AG04449 (cell line): ENCODE measurements at regions of chr12 and their contacts with region 1.

Region 1: GRCh38 chr12:30806989-30807694 is 52.4 kb upstream of the CAPRIN2 start:
- DNase-seq: no peak
- H3K4me3 ChIP-seq: no peak overlapping the region
- CTCF ChIP-seq: peak; percentile 50

Region 2: GRCh38 chr12:29519585-29520182 is 1287.5 kb before region 1 on chr12:
- CTCF ChIA-PET with region 1: interaction called, 57 read pairs
- POLR2A ChIA-PET with region 1: no interaction called
- DNase-seq: no peak
- H3K4me3 ChIP-seq: no peak overlapping the region
- CTCF ChIP-seq: peak; percentile 9

Region 3: GRCh38 chr12:29552324-29552927 is 1254.7 kb before region 1 on chr12:
- CTCF ChIA-PET with region 1: interaction called, 20 read pairs
- POLR2A ChIA-PET with region 1: no interaction called
- DNase-seq: no peak
- H3K4me3 ChIP-seq: no peak overlapping the region
- CTCF ChIP-seq: peak; percentile 84

Region 4: DNA sequence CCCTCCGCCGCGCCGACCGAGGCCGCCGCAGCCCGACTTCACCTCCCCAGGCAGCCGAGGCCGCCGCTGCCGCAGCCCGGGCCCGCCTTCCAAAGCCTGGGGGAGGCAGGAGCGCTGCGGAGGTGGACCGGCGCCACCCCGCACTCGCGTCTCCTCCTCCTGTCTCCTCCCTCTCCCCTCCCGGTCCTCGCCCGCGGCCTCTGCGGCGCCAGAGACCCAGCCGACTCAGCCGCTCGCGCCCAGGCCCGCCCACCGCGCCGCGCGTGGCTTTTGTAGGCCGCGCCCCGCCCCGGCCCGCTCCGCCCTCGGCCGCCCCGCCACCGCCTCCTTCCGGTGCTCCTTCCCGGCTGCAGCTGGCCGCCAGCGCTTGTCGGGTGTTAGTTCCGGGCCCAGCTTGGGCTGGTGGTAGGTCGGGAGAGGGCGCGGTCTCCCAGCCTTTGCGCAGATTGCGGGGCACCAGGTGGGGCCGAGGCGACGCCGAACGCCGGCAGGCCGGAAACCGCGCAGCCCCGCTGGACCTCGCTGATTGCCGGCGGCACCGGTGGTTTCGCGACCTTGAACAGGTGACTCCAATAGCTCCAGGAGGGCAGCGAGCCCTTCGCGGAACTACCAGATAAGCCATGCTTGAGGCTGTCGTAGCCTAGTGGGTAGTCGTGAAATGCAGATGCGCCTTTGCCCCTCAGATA is 52.3 kb before region 1 on chr12 and contains the start of gene CAPRIN2:
- CTCF ChIA-PET with region 1: interaction called, 23 read pairs
- POLR2A ChIA-PET with region 1: no interaction called
- DNase-seq: peak; percentile 33
- H3K4me3 ChIP-seq: peak within 1 kb of the TSS; percentile 77
- CTCF ChIP-seq: peak; percentile 57

Region 5: DNA sequence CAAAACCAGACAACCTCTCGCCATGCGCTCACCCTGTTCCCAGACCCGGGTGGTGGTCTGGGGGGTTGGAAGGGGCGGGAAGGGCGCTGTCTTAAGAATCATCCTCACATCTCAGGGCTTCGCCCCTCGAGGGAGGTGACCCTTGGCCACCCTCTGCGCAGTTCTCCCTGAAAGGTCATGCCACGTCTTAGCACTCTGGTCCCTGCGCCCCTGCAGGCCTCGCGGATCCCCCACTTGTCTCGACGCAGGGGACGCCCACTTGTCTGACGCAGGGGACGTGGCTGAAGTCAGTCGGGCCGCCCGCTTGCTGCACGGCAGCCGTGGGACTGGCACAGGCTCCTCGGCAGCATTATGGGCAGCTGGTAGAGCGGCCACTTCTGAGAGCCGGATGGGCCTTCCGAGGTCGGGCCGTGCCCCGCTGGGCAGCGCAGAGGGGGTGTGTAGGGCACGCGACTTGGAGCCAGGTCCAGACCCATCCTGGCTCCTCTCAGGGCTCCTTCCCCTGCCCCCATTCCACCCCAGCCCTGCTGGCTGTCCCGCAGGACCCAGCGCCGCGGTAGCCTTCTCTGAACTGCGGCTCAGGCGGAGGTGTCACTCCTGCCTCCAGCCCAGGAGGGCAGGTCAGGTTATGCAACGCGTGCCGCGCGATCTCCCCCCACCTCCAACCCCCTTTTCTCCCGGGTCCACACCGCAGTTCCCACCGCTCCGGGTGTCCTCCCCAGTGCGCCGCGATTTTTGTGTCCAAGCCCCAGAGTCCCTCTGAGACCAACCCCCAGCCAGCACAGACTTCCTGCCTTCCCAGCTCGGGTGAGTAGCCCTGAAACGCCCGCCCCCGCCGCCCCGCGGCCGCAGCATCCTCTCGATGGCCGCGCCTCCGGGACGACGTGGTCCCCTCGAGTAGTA is 11.5 kb before region 1 on chr12:
- CTCF ChIA-PET with region 1: interaction called, 24 read pairs
- POLR2A ChIA-PET with region 1: no interaction called
- DNase-seq: no peak
- H3K4me3 ChIP-seq: peak overlapping the region; percentile 72
- CTCF ChIP-seq: peak; percentile 20

Region 6: DNA sequence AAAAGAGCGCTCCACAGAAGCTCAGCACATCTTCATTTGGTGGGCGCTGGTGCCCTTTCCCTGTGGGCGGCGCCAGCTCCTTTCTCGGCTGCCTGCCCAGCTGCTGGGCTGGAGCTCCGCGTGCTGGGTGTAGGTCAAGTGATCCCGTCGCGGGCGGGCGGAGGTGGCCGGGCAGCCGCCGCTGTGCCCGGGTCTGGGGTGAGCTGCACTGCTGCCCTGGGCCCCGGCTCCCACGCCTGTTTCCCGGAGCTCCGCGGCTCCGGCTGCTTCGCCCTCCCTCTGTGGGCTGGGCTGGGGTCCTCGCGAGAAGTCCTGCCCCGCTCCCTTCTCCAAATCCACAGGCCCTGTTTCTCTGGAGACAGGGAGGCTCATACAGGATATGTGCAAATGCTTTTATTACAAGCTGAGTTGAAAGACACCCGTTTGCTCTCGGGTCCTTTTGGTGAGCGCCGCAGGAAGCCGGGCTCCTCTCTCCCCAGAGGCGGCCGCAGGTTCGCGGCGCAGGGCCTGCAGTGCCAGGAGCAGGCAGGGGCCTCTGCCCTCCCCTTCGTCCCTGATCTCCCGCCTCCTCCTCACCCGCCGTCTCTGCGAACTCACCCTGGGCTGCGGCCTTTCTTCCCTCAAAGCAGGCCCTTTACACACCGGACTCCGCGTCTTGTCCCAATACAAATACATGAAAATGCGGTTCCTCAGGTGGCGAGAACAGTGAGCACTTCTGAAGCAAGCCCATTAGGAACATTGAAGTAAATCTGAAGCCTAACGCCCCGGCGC is 15.4 kb after region 1 on chr12:
- CTCF ChIA-PET with region 1: interaction called, 21 read pairs
- POLR2A ChIA-PET with region 1: no interaction called
- DNase-seq: no peak
- H3K4me3 ChIP-seq: peak overlapping the region; percentile 50
- CTCF ChIP-seq: no peak